ENCODE measurements at regions of chr11 and their contacts with region 1.

Region 1: DNA sequence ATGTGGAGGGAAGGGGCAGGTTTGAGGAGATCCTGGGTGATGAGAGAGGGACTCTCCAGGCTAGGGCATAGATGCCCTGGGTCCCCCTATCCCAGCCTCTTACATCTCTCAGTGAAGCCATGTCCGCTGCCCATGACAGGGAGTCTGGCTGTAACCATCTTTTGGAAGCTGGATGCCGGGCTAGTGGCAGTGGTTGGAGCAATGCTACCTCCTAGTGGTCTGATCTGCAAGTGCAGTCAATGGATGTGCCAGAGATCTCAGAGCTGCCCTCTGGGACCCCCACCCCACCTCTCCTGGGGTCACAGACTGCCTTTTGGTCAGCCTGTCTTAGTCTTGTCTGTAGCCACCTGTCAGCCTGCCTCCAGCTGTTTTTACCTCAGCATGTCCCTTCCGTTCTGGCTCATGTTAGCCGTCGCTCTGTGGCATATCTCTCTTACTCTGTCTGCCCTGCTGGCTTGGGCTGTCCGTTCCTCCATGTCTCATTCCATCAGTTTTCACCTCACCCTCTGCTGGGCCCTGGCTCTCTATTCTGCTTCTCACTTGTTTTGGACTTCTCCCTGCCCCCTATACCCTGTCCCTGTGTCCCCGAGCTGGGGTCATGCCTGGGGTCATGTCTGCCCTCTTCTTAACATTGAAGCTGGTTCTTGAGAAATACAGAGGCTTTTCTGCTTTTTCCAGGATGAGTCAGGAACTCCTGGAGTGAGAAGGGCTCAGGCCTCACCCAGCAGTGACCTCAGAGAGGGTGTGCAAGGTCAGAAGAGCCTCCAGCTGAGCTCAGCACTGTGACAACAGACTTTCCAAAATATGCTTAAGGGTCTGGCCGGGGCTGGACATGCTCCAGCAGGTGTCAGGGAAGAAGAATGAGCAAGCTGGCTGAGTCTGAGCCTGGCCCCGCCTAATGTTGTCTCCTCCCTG is 52.0 kb upstream of the THY1 start:
- DNase-seq: peak; percentile 60
- ATAC-seq: peak; percentile 86

Region 2: GRCh38 chr11:119356349-119357031 is 118.4 kb before region 1 on chr11:
- intact Hi-C with region 1: loop called (anchors 10 kb)
- DNase-seq: peak; percentile 89
- ATAC-seq: peak; percentile 77